CD4-positive, alpha-beta T cell (primary cell): ENCODE measurements at regions of chr2 and their contacts with region 1.

Region 1: DNA sequence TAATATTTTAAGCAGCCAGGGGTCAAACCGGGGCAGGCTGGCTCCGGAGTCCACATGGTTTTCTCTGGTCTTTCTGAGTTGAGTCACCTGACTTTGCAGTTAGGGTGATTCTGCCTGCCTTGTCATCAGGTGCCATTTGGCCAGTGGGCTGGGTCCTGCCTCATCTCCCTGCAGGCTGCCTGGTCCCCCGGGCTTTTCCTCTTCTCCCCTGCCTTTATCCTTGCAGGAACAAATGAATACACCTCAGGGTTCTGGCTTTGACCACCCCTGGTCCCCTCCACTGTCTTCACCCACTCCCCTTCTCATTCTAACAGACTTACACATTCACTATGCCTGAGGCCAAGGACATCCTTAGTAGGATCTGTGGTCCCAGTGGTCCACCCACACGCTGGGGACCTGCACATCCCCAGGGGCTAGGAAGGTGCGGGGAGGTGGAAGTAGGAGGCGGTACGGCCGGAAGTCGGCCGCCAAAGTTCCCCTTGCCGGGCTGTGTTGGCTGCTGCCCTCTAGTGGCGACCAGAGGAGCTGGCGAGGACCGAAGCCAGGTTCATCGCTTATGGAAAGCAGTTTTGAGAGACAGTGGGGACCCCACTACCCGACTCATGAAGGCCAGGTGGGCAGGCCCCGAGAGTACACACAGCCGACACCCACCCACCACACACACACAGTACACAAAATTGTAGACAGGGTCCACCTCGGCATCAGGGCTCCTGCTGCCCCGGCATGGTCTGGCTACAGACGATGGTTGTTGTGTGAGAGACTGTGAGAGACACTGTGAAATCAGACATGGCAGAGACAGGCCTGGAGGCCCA is 6.3 kb upstream of the TEX261 start:
- DNase-seq: peak; percentile 70 to 91 (median 77)
- ATAC-seq: peak; percentile 99
- H3K4me3 ChIP-seq: peak overlapping the region; percentile 35
- H3K4me3 Mint-ChIP-seq: peak overlapping the region; percentile 16
- H3K27ac ChIP-seq: peak overlapping the region in 1 of 2 donors; percentile 29
- H3K27ac Mint-ChIP-seq: no peak overlapping the region
- H3K4me1 ChIP-seq: peaks cover 19% of the 10 kb centered on the region
- H3K4me1 Mint-ChIP-seq: peaks cover 12% of the 10 kb centered on the region
- H3K27me3 ChIP-seq: no peaks in the 10 kb centered on the region
- H3K27me3 Mint-ChIP-seq: no peaks in the 10 kb centered on the region
- CTCF ChIP-seq: peak; percentile 88

Region 2: GRCh38 chr2:70851704-70852103 is 149.3 kb before region 1 on chr2:
- CTCF ChIA-PET with region 1: no interaction called
- POLR2A ChIA-PET with region 1: no interaction called
- intact Hi-C with region 1: loop called in 1 of 2 experiments (anchors 10 kb)
- DNase-seq: peak in 6 of 14 experiments; percentile 7 to 64 (median 48)
- ATAC-seq: peak; percentile 85
- H3K4me3 ChIP-seq: no peak overlapping the region
- H3K4me3 Mint-ChIP-seq: peak overlapping the region; percentile 26
- H3K27ac ChIP-seq: no peak overlapping the region
- H3K27ac Mint-ChIP-seq: peak overlapping the region; percentile 22
- H3K4me1 ChIP-seq: peaks cover 6% of the 10 kb centered on the region
- H3K4me1 Mint-ChIP-seq: peaks cover 24% of the 10 kb centered on the region
- H3K27me3 ChIP-seq: no peaks in the 10 kb centered on the region
- H3K27me3 Mint-ChIP-seq: no peaks in the 10 kb centered on the region
- CTCF ChIP-seq: no peak

Region 3: DNA sequence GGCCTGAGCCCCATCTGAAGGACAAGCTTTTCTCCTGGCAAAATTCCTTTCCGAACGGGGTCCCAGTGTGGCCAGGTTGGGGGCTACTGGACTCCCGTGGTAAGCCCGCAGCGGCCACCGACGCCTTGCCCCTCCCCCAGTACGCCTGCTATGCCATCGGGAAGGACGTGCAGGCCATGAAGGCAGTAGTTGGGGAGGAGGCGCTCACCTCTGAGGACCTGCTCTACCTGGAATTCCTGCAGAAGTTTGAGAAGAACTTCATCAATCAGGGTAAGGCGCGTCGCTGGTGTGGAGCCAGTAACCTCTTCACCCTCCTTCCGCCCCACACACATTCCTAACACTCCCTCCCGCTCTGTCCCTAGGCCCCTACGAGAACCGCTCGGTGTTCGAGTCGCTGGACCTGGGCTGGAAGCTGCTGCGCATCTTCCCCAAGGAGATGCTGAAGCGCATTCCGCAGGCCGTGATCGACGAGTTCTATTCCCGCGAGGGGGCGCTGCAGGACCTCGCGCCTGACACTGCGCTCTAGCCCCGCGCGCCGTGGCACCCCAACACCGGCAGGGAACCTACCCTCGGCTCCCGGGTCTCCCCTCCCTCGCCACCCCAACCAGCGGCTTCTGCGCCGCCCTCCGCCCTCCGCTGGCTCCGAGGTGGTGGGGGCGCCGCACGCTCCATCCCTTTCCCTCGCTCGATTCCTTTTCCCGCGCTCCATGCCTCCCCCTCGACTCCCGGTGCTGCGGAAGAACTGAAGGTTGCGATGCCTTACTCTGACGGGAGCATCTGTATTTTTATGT is 36.2 kb before region 1 on chr2:
- CTCF ChIA-PET with region 1: interaction called, 12 read pairs
- POLR2A ChIA-PET with region 1: no interaction called
- intact Hi-C with region 1: loop called (anchors 1 kb)
- DNase-seq: peak; percentile 71 to 92 (median 79)
- ATAC-seq: peak; percentile 99
- H3K4me3 ChIP-seq: peak overlapping the region; percentile 63
- H3K4me3 Mint-ChIP-seq: peak overlapping the region; percentile 87
- H3K27ac ChIP-seq: no peak overlapping the region
- H3K27ac Mint-ChIP-seq: no peak overlapping the region
- H3K4me1 ChIP-seq: peaks cover 11% of the 10 kb centered on the region
- H3K4me1 Mint-ChIP-seq: peaks cover 8% of the 10 kb centered on the region
- H3K27me3 ChIP-seq: peaks cover 17 to 19% of the 10 kb centered on the region in 2 experiments
- H3K27me3 Mint-ChIP-seq: peaks cover 41% of the 10 kb centered on the region
- CTCF ChIP-seq: peak; percentile 91

Region 4: DNA sequence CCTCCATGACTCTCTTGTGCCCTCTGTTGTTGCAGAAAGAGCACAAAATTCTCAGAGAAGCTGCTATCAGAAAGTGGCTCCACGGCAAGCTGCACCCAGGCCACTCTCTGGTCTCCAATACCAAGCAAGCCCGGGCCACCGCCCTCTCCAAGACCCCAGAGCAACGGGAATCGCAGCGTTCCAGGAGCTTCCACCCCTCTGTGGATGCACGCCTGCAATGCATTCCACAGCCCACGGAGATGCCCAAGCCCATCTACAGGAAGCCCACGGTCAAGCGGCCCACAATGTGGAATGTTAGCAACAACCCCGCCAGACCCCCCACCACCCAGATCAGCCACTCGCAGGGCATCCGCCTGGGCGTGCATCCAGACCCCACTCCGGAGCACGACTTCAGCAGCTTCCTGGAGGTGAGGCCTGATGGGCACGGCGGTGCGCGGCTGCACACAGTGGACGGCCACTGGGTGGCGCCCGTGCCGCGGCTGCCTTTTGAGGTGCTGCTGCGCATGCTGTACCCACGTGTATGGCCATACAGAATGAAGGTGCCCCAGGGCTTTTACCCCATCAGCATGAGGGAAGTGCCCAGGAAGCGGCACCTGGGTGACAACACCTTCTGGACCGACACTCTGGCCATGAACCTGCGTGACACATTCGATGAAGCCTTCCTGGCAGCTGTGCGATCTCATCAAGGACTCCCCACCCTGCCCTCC is 16.3 kb before region 1 on chr2:
- CTCF ChIA-PET with region 1: interaction called, 25 read pairs
- POLR2A ChIA-PET with region 1: interaction called, 4 read pairs
- intact Hi-C with region 1: loop called (anchors 2 kb)
- DNase-seq: peak; percentile 71 to 90 (median 80)
- ATAC-seq: peak; percentile 100
- H3K4me3 ChIP-seq: no peak overlapping the region
- H3K4me3 Mint-ChIP-seq: peak overlapping the region; percentile 23
- H3K27ac ChIP-seq: no peak overlapping the region
- H3K27ac Mint-ChIP-seq: peak overlapping the region; percentile 27
- H3K4me1 ChIP-seq: peaks cover 12% of the 10 kb centered on the region
- H3K4me1 Mint-ChIP-seq: peaks cover 22% of the 10 kb centered on the region
- H3K27me3 ChIP-seq: no peaks in the 10 kb centered on the region
- H3K27me3 Mint-ChIP-seq: no peaks in the 10 kb centered on the region
- CTCF ChIP-seq: peak; percentile 90

Region 5: DNA sequence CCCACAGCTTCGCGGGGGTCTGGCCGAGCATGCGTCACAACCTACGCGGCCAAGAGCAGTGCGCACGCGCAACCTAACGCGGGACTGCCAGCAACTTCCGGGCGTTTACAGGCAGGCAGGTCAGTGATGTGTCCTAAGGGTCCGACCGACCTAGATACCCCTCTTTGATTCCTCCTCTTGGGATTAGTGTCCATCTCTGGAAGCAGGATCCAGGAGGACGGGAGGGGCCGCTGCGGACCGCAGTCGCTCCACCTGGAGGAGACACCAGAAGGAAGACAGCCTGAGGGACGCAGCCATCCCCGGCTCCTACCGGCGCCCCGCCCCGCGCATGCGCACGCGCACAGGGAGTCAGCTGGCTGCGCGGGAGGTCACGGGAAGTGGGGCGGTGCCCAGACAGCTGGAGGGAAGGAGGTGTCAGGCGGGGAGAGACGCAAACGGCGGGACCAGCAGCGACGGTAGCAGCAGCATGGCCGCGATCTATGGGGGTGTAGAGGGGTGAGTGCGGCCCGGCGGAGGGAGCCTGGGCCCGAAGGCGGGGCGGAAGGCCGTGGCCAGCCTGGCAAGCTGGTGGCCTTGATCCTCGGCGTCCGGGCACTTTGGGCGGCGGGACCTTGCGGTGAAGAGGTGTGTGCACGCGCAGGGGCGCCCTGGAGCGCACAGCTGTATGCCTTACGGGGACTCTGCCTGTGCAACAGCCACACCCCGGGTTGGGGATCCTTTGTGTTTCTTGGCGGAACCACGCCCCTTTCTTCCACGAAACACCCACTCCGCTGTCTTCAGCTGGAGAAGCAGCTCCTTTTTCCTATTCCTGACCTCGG is 67.4 kb after region 1 on chr2 and contains the start of gene NAGK:
- CTCF ChIA-PET with region 1: interaction called, 10 read pairs
- POLR2A ChIA-PET with region 1: interaction called, 16 read pairs
- intact Hi-C with region 1: no loop called
- DNase-seq: peak; percentile 94 to 99 (median 97)
- ATAC-seq: peak; percentile 78
- H3K4me3 ChIP-seq: peak within 1 kb of the TSS; percentile 97
- H3K4me3 Mint-ChIP-seq: peak within 1 kb of the TSS; percentile 99
- H3K27ac ChIP-seq: peak within 1 kb of the TSS; percentile 91 to 98
- H3K27ac Mint-ChIP-seq: peak within 1 kb of the TSS; percentile 99
- H3K4me1 ChIP-seq: peaks cover 56% of the 10 kb centered on the region
- H3K4me1 Mint-ChIP-seq: peaks cover 68% of the 10 kb centered on the region
- H3K27me3 ChIP-seq: no peaks in the 10 kb centered on the region
- H3K27me3 Mint-ChIP-seq: no peaks in the 10 kb centered on the region
- CTCF ChIP-seq: no peak
- total RNA-seq, gene NAGK: 62.3 to 73.3 TPM